Sigmoid colon (tissue), 7 donors: ENCODE measurements at regions of chr19 and their contacts with region 1.

Region 1: GRCh38 chr19:55385740-55386529 is at the start of gene RPL28:
- DNase-seq: peak; percentile 99
- H3K4me3 ChIP-seq: peak within 1 kb of the TSS; percentile 80 to 95 (median 88)
- H3K27ac ChIP-seq: peak within 1 kb of the TSS; percentile 94 to 97 (median 96)
- H3K4me1 ChIP-seq: peaks cover 0 to 59% (median 54%) of the 10 kb centered on the region in 4 donors
- H3K27me3 ChIP-seq: no peaks in the 10 kb centered on the region
- CTCF ChIP-seq: no peak
- EP300 ChIP-seq: no peak
- POLR2A ChIP-seq: peak; percentile 99
- total RNA-seq, gene RPL28: 253 to 607 (median 503) TPM

Region 2: DNA sequence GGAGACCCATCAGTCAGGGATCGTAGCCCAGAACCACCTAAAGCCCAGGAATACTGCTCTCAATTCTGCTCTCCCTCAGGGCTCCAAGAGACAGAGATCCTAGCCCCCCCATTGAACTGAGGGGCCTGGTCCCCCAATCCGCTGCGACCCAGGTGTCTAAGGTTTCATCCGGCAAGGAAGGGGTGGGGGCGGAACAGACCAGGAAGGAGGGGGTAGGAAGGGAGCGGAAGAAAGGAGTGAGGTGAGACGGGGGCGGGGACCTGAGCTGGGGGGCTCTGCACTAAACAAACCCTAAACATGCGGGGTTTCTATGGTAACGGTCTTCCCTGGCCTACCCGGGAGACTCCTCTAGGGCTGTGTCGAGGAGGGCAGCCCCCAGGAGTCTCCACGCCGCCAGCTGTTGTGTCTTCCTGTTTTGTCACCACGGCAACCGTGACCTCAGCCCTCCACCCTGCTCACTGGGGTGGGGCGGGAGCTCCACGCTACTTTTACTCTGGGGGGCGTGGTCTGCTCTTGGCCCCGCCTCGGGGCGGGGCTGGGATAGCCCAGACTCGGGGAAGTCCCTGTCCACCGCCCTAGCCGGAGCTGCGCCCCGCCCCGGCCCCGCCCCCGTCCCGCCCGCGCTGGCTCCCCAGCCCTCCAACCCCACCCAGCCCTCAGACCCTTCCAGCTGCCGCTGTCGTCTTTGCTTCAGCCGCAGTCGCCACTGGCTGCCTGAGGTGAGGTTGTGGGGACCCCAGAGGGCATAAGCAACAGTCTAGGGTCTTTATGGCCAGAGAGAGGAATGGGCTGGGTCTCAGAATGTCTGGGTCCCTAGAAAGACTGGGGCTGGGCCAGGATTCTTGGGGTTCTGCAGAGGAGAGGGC is 1518.5 kb before region 1 on chr19 and contains the start of gene MYADM:
- intact Hi-C with region 1: loop called (anchors 5 kb)
- DNase-seq: peak; percentile 100
- H3K4me3 ChIP-seq: peak within 1 kb of the TSS; percentile 79 to 94 (median 92)
- H3K27ac ChIP-seq: peak within 1 kb of the TSS; percentile 94 to 98 (median 96)
- H3K4me1 ChIP-seq: peaks cover 0 to 51% (median 45%) of the 10 kb centered on the region in 4 donors
- H3K27me3 ChIP-seq: no peaks in the 10 kb centered on the region
- CTCF ChIP-seq: no peak
- EP300 ChIP-seq: peak in 2 of 4 donors; percentile 39 to 69
- POLR2A ChIP-seq: peak; percentile 86 to 96
- total RNA-seq, gene MYADM: 65.5 to 189 (median 97.3) TPM

Region 3: DNA sequence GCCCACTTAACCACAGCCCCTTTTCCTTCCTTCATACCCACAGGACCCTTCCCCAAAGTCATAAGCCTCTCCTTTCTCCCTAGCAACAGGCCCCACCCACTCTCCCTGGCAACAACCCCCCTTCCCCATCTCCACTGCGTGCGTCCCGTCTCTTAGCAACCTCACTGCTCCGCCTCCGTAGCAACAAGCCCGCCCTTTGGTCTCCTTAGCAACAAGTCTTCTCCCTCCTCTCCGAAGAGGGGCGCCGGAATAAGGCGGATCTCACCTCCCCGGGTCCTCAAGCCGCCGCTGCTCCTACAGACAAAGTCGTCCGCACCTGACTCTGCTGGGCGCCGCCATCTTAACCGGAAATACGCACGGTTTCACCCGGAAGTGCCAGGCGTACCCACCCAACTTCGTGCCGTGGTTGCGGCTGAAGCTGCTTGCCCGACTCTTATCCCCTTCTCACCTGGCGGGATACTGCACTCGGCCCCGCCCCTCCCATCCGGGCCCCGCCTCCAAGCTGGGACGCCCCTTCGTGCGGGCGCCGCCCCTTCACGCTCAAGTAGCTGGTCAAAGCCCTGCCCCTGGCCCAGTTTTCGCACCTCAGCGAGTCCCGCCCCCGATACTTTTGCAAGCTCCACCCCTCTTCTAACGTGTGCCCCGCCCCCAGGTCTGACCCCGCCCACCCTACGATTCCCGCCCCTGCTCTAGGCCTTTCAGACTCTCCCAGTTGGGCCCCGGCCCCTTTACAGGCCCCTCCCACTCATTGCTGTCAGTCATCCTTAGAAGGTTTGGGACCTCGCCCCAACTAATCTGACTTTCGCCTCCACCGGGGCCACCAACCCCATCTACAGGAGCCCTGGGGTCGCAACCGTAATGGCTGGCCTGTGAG is 105.9 kb before region 1 on chr19 and contains the start of gene HSPBP1:
- intact Hi-C with region 1: loop called (anchors 5 kb)
- DNase-seq: peak; percentile 98
- H3K4me3 ChIP-seq: peak within 1 kb of the TSS; percentile 47 to 80 (median 68)
- H3K27ac ChIP-seq: peak within 1 kb of the TSS; percentile 78 to 86 (median 81)
- H3K4me1 ChIP-seq: peaks cover 0 to 35% (median 30%) of the 10 kb centered on the region in 4 donors
- H3K27me3 ChIP-seq: no peaks in the 10 kb centered on the region
- CTCF ChIP-seq: no peak
- EP300 ChIP-seq: no peak
- POLR2A ChIP-seq: no peak
- total RNA-seq, gene HSPBP1: 19.7 to 30.5 (median 23.8) TPM

Region 4: DNA sequence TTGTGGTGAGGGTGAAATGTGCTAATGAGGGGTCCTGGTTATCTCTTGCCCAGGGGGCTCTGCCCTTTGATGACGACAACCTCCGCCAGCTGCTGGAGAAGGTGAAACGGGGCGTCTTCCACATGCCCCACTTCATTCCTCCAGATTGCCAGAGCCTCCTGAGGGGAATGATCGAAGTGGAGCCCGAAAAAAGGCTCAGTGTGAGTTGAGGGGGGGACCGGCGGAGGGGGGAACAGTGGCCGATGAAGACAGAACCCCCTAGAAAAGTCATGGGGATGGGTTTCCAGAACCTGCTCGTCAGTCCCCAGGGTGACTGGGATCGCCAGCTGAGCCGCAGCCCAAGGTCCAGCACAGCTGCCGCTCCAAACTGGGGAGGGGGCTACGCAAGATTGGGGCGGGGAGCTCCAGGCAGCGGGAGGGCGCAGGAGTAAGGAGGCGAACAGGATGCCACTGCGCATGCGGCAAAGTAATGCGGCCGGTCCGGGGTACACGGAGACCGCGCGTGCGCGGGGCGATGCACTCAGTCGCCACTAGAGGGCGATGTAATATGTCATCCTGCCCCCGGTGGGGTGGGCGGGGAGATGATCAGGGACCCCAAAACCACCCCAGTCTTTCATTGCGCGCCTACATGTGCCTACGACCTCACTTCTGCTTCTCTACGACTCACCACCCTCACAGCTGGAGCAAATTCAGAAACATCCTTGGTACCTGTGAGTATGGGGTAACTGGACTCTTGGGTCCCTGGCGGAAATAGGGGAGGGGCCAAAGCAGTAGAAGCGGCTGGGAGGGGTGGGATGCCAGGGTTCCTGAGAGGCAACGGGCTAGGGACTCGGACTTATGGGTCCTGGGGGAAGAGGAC is 84.2 kb before region 1 on chr19:
- intact Hi-C with region 1: loop called (anchors 1 kb)
- DNase-seq: peak; percentile 93
- H3K4me3 ChIP-seq: peak overlapping the region in 3 of 4 donors; percentile 30 to 44 (median 38)
- H3K27ac ChIP-seq: peak overlapping the region in 1 of 4 donors; percentile 42
- H3K4me1 ChIP-seq: peaks cover 0 to 13% (median 10%) of the 10 kb centered on the region in 4 donors
- H3K27me3 ChIP-seq: no peaks in the 10 kb centered on the region
- CTCF ChIP-seq: peak; percentile 91 to 100 (median 95)
- EP300 ChIP-seq: no peak
- POLR2A ChIP-seq: no peak

Region 5: DNA sequence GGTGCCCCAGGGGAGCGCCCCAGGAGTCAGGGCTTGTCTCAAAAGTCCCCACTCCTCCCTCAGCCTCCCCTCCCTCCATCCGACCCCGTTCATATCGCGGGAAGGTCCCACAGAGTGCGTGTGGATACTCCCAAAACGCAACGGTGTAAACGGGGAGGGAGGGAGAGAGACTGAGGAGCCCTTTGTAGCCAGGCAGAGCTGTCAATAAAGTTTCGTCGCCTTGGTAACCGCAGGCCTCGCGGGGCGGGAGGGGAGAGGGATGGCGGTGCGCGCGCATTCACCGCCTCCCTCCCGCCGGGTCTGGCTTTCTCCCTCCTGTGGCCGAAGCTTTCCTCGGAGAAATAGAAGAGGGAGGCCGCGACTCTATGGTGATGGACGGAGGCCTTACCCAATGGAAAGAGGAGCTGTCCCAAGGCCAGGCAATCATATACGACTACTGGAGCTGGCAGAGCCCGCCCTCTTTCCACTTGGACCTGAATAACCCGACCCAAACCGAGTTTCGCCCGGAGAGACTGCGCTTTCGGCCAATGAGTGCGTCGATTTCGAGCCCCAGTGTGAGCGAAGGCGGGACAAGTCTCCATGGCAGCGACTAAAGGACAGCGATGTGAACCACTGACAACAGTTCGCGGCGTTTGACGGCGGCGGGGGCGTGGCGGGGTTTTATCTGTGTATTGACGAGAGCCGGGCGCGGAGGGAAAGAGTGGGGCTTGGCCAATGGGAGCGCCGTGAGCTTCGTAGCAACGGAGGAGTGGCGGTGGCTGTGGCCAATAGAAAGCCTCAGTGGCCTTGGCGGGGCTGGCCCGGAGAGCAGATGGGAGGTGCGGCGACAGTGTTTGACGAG is 46.7 kb before region 1 on chr19 and contains the start of gene KMT5C:
- intact Hi-C with region 1: loop called (anchors 1 kb)
- DNase-seq: peak; percentile 100
- H3K4me3 ChIP-seq: peak within 1 kb of the TSS; percentile 55 to 96 (median 78)
- H3K27ac ChIP-seq: peak within 1 kb of the TSS; percentile 92 to 97 (median 94)
- H3K4me1 ChIP-seq: peaks cover 0 to 29% (median 23%) of the 10 kb centered on the region in 4 donors
- H3K27me3 ChIP-seq: peaks cover 0 to 8% (median 0%) of the 10 kb centered on the region in 3 donors
- CTCF ChIP-seq: peak in 3 of 4 experiments; percentile 39 to 63 (median 40)
- EP300 ChIP-seq: no peak
- POLR2A ChIP-seq: peak; percentile 11 to 12
- total RNA-seq, gene KMT5C: 7.5 to 12.7 (median 9.6) TPM

Region 6: DNA sequence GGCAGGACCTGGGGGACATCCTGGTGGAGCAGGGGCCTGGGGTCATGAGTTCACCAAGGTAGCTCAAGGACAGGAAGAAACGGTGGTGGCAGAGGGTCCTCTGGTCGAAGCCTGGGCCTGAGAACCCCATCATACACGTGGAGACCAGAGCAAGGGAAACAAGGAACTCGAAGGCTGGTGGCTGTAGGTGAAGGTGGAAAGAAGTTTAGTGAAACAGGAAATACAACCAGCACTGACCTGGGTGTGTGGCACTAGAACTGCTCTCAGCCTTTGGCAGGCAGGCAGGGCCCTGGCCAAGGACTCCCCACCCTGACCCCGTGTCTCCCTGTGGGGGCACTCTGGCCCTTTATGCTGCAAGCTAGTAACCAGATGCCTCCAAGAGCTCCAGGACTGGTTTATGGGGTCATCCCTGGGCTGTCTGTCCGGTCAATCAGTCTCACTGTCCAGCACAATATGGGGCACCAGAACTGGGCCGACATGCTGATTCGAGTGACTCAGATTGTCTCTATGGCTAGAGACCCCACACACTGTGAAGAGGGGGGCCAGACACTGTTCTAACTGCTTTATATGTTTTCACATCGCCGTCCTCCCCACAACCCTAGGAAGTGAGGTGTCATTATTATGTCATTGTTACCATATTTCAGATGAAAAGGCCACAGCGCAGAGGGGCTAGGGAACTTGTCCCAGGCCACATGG is 35.2 kb before region 1 on chr19:
- intact Hi-C with region 1: no loop called
- DNase-seq: no peak
- H3K4me3 ChIP-seq: no peak overlapping the region
- H3K27ac ChIP-seq: no peak overlapping the region
- H3K4me1 ChIP-seq: peaks cover 0 to 19% (median 17%) of the 10 kb centered on the region in 4 donors
- H3K27me3 ChIP-seq: peaks cover 28 to 62% (median 50%) of the 10 kb centered on the region in 3 donors
- CTCF ChIP-seq: no peak
- EP300 ChIP-seq: no peak
- POLR2A ChIP-seq: no peak

Region 7: DNA sequence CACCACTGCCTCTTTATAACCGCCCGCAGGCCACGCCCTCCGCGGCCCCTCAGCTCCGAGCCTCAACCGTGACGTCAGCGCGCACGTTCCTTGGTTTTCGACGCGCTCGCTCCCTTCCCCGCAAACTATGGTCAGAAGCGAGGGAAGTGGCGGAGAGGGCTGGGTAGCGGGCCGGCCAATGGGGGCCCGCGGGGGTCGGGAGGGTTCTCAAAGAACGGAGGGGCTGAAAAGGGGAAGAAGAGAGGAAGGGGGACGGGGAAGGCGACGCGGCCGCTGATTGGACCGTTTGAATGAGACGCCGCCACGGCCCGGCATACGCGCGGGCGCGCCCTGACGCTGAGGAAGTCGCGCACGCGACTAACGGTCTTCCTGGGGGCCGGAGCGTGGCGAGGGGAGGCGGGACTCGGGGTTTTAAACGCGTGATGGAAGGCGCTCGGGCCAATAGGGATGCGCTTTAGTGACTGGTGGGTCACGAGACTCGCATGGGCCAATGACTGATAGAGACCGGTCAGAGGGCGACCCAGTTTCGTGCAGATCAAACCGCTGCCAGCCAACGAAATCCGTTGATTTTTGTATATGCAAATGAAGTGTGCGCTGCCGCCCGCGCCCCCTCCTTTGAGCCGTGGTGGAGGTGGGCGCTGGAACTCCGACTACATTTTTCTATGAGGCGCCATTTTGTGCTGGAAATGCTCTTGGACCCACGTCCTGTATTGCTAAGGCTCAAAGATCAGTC is 22.0 kb after region 1 on chr19:
- intact Hi-C with region 1: loop called (anchors 1 kb)
- DNase-seq: peak; percentile 100
- H3K4me3 ChIP-seq: peak overlapping the region; percentile 82 to 99 (median 89)
- H3K27ac ChIP-seq: peak overlapping the region; percentile 96 to 100 (median 98)
- H3K4me1 ChIP-seq: peaks cover 0 to 22% (median 20%) of the 10 kb centered on the region in 4 donors
- H3K27me3 ChIP-seq: no peaks in the 10 kb centered on the region
- CTCF ChIP-seq: no peak
- EP300 ChIP-seq: peak in 1 of 4 donors; percentile 36
- POLR2A ChIP-seq: peak; percentile 31 to 59

Region 8: DNA sequence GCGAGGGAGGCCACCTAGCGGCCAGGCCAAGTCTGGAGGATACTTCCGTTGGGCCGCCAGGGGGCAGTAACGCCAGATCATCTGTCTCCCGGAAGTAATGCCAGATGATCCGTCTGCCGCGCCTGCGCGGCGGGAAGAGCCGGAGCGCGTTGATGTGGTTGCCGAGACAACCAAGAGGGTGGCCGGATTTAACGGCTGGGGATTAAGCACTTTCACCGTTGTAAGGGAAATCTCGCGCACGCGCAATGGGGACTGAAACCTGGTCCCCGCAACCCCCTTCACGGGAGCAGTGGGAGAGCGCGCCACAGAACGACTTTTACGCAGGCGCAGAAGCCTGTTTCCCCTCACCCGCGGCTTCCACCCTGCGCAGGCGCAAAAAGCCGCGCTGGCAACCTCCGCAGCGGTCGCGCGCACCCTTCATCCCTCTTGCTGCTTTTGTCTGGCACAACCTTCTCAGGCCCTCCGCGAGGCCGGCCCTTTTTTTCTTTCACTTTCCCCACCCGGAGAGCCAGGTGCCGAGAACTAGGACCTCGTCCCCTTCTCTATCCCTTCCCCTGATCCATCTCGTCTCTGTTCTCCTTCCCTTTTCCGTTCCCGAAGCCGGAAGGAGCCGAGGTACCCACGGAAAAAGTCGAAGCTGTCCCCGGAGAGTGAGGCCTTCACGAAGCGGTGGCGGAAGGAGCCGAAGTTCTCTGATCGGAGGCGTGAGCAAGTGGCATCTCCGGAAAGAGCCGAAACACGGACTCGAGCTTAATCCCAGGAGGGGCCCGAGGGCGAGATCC is 268.0 kb after region 1 on chr19:
- intact Hi-C with region 1: loop called (anchors 1 kb)
- DNase-seq: peak; percentile 100
- H3K4me3 ChIP-seq: peak overlapping the region; percentile 86 to 97 (median 94)
- H3K27ac ChIP-seq: peak overlapping the region; percentile 98 to 100 (median 99)
- H3K4me1 ChIP-seq: peaks cover 0 to 56% (median 52%) of the 10 kb centered on the region in 4 donors
- H3K27me3 ChIP-seq: no peaks in the 10 kb centered on the region
- CTCF ChIP-seq: peak; percentile 92 to 100 (median 100)
- EP300 ChIP-seq: peak in 1 of 4 donors; percentile 20
- POLR2A ChIP-seq: peak; percentile 83 to 92

Region 9: GRCh38 chr19:55663846-55664536 is 278.1 kb after region 1 on chr19:
- intact Hi-C with region 1: no loop called
- DNase-seq: no peak
- H3K4me3 ChIP-seq: no peak overlapping the region
- H3K27ac ChIP-seq: no peak overlapping the region
- H3K4me1 ChIP-seq: peaks cover 0 to 12% (median 9%) of the 10 kb centered on the region in 4 donors
- H3K27me3 ChIP-seq: no peaks in the 10 kb centered on the region
- CTCF ChIP-seq: no peak
- EP300 ChIP-seq: no peak
- POLR2A ChIP-seq: no peak